Vagina (tissue), 2 donors: ENCODE measurements at regions of chrX and their contacts with region 1.

Region 1: DNA sequence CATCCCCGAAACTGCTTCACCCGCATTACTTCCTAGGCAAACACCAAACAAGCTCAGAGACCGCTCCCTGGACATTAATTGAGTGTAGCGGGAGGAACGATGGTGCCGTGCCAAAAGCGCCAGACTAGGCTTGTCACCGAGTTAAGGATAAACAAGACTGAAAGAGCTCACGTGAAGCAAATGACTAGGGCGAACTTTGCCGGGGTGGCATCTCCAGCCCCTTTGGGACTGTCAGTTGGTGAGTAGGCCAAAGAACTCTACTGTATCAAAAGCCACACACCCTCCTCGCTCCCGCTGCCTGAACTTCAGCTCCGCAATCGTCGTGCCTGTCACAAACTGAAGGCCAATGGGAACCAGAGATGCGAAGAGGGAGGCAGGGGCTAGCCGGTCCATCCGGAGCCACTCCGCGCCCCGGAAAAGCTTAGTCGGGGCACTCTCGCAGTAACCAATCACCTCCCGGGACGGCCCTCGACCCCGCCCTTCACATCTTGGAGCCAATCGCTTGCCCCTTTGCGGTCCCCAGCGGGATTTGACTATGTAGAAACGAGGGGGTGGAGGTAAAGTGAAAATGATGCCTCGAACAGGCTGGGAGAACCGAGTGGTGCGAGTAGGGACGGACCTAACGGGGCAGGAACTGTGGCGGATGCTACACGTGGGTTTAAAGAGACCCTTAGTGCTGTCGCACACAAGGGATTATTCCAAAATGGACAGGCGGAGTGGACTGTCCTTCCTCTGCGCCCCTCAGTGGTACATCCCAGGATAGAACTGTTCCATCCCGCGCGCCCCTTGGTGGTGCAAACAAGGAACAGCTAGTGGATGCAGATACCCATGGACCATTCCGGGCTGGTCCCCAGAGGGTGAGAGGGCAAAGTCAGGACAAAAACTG is 37.1 kb upstream of the FAM156A start:
- DNase-seq: peak; percentile 94 to 95
- H3K4me3 ChIP-seq: peak overlapping the region; percentile 52 to 55
- H3K27ac ChIP-seq: peak overlapping the region; percentile 73
- H3K4me1 ChIP-seq: peaks cover 15% of the 10 kb centered on the region
- H3K27me3 ChIP-seq: no peaks in the 10 kb centered on the region
- CTCF ChIP-seq: peak; percentile 34 to 75 (median 35)
- POLR2A ChIP-seq: no peak

Region 2: DNA sequence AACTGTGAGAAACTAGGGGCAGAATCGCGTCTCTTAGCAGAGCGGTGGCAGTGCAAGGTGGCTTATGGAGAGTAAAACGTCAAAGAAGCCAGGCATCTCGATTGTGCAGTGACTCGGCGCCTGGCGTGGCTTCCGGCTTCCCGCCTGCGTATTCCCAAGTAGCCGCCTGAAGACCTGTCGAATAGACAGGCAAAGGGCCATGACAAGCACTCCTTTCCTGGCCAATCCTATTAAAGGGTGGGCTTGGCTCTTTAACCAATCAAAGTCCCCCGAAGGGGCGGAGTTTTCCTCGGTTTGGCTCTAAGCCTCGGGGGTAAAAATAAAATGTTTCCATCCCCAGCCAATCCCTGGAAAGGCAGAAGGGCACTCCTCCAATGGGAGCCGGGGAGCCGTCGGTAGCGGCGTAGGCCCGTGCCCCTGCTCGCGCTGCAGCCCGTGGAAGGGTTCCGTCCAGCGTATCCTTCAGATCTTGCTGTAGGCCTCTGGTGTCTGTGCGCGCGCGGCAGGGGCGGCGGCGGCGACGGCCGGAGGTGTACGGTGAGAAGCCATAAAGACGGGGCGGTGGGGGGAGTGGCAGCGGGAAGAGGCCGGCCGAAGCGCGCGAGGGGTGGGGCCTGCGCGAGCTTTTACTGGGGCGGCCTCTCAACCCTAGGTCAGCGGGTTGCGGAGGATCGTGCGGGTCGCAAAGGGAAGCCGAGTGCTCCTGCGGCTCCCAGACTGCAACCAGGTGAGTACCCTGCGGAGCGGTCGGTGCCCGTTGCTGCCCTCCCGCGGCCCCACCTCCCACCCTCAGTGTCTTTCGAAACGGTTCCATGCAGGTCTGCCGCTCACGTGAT is 98.6 kb after region 1 on chrX and contains the start of gene KANTR:
- intact Hi-C with region 1: loop called (anchors 5 kb)
- DNase-seq: peak in 1 of 2 donors; percentile 96
- H3K4me3 ChIP-seq: peak within 1 kb of the TSS; percentile 54 to 60
- H3K27ac ChIP-seq: peak within 1 kb of the TSS; percentile 80
- H3K4me1 ChIP-seq: peaks cover 8% of the 10 kb centered on the region
- H3K27me3 ChIP-seq: no peaks in the 10 kb centered on the region
- CTCF ChIP-seq: no peak
- POLR2A ChIP-seq: peak in 1 of 2 donors; percentile 18
- total RNA-seq, gene KANTR: 35.8 TPM